Activated T-helper 2 cell treated with anti-CD3 and anti-CD28 coated beads, Interferon-gamma antibody, Interleukin-2, Interleukin-4, amounts not matched to agents 10 μg/mL and 5 μg/mL and 100 μg/mL, durations not matched to agents 14 hours and 24 hours and 36 hours (primary cell): ENCODE measurements at regions of chr15 and their contacts with region 1.

Region 1: GRCh38 chr15:55255714-55256113 is 33.9 kb downstream of the RAB27A start:
- DNase-seq: no peak
- H3K4me3 Mint-ChIP-seq: peak overlapping the region; percentile 72
- H3K27ac Mint-ChIP-seq: peak overlapping the region; percentile 82
- H3K4me1 Mint-ChIP-seq: peaks cover 66% of the 10 kb centered on the region
- H3K27me3 Mint-ChIP-seq: no peaks in the 10 kb centered on the region

Region 2: GRCh38 chr15:55183679-55184078 is 72.0 kb before region 1 on chr15:
- intact Hi-C with region 1: no loop called
- DNase-seq: no peak
- H3K4me3 Mint-ChIP-seq: no peak overlapping the region
- H3K27ac Mint-ChIP-seq: no peak overlapping the region
- H3K4me1 Mint-ChIP-seq: peaks cover 27% of the 10 kb centered on the region
- H3K27me3 Mint-ChIP-seq: no peaks in the 10 kb centered on the region

Region 3: DNA sequence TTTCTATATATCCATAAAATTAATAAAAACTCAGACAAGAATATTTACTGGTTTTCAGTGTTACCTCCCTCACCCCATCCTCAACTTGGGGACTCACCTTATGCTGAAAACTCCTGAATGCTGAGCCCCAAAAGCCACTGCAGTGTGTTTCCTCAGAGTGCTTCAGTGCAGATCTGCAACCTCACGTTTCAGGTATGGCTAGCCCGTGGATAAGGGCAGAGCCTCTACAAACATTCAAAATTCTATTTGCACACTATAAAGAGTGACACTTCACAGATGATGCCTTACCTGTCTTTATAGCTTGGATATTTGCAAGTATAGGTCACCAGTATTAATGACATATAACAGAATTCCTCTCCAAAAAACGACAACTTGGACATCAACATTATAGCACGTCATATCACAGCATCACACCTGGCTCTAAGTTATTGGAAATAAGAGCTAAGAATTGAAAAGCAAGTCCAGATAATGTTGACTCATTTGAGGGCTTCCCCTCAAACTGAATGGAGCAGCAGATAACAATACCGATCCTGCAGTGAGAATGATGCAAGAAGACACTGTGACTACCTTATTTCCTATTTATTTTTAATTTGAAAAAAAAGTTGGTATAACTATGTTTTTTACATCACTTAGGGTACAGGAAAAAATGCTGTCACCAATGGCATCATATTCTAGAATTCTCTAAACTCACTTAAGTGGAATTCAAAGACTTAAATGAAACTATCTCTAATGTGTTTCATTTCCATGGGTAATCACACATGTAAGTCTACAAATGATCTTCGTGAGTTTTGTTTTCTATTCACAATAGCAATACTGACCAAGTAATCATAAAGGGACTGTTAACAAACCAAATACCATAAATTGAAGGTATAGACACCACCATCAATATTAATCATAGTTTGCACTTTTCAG is 18.2 kb before region 1 on chr15:
- intact Hi-C with region 1: loop called (anchors 2 kb)
- DNase-seq: no peak
- H3K4me3 Mint-ChIP-seq: peak overlapping the region; percentile 22
- H3K27ac Mint-ChIP-seq: peak overlapping the region; percentile 84
- H3K4me1 Mint-ChIP-seq: peaks cover 56% of the 10 kb centered on the region
- H3K27me3 Mint-ChIP-seq: no peaks in the 10 kb centered on the region

Region 4: DNA sequence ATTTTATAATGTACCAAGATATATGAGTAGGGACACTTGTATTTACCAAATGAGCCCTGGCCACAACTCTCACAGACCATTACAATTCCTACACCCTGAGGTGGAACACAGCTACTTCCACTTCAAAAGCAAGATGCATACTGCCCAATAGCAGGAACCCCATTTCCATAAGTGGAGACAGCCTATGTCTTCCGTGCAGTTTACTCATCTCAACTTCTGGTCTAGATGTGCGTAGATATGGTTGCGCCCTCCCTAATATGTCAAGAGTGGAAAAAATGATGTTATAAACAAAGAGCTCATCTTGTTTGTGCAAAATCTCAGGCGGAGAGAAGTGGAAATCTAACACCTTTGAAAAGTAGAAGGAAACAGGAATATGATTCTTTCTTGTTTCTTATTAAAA is 10.7 kb before region 1 on chr15:
- intact Hi-C with region 1: loop called (anchors 1 kb)
- DNase-seq: no peak
- H3K4me3 Mint-ChIP-seq: no peak overlapping the region
- H3K27ac Mint-ChIP-seq: peak overlapping the region; percentile 31
- H3K4me1 Mint-ChIP-seq: peaks cover 57% of the 10 kb centered on the region
- H3K27me3 Mint-ChIP-seq: no peaks in the 10 kb centered on the region

Region 5: DNA sequence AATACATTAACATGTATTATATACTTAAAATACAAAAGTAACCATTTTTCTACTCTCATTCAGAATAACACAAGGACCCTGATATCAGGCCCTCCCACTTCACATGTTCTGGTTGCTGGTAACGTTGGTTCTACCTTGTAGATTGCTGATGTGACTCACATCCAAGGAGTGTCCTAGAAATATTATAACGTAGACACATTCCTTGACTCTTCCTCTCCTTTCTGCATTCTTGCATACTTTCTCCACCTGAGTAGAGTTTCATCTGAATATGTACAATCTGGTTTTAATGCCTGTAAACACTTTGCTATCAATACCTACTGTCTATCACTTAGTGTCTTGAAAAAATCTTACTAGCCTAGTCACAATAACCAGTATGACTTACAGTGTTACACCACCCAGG is 772.7 kb after region 1 on chr15:
- intact Hi-C with region 1: no loop called
- DNase-seq: no peak
- H3K4me3 Mint-ChIP-seq: no peak overlapping the region
- H3K27ac Mint-ChIP-seq: no peak overlapping the region
- H3K4me1 Mint-ChIP-seq: no peaks in the 10 kb centered on the region
- H3K27me3 Mint-ChIP-seq: peaks cover 18% of the 10 kb centered on the region